Panc1 (cell line): ENCODE measurements at regions of chr21 and their contacts with region 1.

Region 1: GRCh38 chr21:44510508-44511210 is 29.3 kb downstream of the KRTAP10-1 start:
- DNase-seq: no peak
- ATAC-seq: peak; percentile 79
- H3K4me3 ChIP-seq: no peak overlapping the region
- H3K27ac ChIP-seq: no peak overlapping the region
- H3K4me1 ChIP-seq: no peaks in the 10 kb centered on the region
- H3K27me3 ChIP-seq: no peaks in the 10 kb centered on the region
- CTCF ChIP-seq: peak; percentile 86

Region 2: GRCh38 chr21:44723177-44724131 is 212.8 kb after region 1 on chr21:
- CTCF ChIA-PET with region 1: no interaction called
- POLR2A ChIA-PET with region 1: no interaction called
- in situ Hi-C with region 1: no loop called
- intact Hi-C with region 1: no loop called
- DNase-seq: no peak
- ATAC-seq: no peak
- H3K4me3 ChIP-seq: no peak overlapping the region
- H3K27ac ChIP-seq: no peak overlapping the region
- H3K4me1 ChIP-seq: no peaks in the 10 kb centered on the region
- H3K27me3 ChIP-seq: no peaks in the 10 kb centered on the region
- CTCF ChIP-seq: no peak

Region 3: DNA sequence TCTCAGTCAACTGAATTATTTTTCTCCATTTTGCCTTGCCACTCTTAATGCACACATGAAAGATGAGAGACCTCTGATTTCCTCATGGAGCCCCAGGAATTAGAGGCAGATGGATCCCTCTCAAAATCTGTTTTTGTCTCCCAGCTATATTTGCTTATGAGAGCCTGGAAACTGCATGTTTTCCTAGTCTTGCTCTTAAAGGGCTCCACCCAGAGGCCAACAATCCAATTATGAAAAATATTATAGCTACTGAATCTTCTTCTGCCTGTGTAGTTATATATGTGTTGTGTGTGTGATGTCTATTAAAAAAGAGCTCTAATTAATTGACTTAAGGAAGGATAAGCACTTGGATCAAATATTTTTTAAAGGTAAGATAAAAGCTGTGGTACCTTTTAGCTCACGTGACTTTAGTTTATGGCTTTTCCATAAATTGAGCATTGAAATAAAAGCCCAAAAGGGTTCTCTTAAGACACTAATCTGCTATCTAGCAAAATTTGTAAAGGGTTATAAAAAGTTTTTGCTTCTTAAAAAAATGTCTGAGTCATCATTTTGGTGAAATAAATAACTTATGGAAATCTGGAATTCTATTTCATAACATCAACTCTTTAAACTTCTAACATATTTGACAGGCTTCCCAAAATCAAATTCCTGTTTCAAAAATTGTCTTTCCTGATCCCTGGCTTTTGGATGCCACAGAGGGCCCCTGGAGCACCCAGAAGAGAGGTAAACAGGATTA is 231.9 kb after region 1 on chr21:
- CTCF ChIA-PET with region 1: interaction called, 3 read pairs
- POLR2A ChIA-PET with region 1: no interaction called
- in situ Hi-C with region 1: no loop called
- intact Hi-C with region 1: loop called (anchors 5 kb)
- DNase-seq: no peak
- ATAC-seq: no peak
- H3K4me3 ChIP-seq: no peak overlapping the region
- H3K27ac ChIP-seq: no peak overlapping the region
- H3K4me1 ChIP-seq: no peaks in the 10 kb centered on the region
- H3K27me3 ChIP-seq: no peaks in the 10 kb centered on the region
- CTCF ChIP-seq: peak; percentile 50

Region 4: DNA sequence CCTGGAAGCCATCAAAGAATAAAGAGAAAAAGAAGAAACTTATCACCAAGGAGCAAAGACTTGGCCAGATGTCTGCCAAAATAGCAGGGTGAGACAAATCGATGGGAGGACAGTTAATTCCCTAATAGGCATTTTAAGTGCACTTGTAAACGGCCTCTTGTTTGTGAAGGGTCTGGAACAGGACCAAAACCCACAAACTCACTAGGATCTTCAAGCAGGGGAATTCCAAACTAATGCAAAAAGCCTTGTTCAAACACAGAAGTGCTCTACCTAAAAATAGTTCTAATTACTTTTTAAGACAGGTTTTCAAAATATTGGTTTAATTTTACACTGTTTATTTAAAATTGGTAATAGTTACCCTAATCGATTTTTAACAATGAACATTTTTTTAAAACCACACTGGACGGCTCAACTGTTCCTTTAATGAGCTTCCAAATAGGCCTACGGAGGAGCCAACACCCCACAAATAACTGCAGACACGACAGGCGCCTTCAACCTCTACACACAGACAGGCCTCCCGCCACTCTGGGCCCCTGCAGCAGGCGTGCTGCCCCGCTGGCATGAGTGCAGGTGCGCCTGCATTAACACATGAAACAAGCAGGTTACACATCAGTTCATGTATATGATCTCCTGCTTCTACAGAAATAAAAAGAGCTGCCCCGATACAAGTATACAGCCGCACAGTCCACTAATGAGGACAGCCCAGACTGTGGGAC is 275.1 kb after region 1 on chr21:
- CTCF ChIA-PET with region 1: no interaction called
- POLR2A ChIA-PET with region 1: no interaction called
- in situ Hi-C with region 1: no loop called
- intact Hi-C with region 1: loop called (anchors 10 kb)
- DNase-seq: no peak
- ATAC-seq: no peak; the same call in 1 of the 2 replicates
- H3K4me3 ChIP-seq: no peak overlapping the region
- H3K27ac ChIP-seq: 0 out of 2 replicates have a peak overlapping the region, but pooled peaks have one; percentile 29
- H3K4me1 ChIP-seq: peaks cover 12% of the 10 kb centered on the region
- H3K27me3 ChIP-seq: no peaks in the 10 kb centered on the region
- CTCF ChIP-seq: no peak

Region 5: GRCh38 chr21:44831227-44831860 is 320.7 kb after region 1 on chr21:
- CTCF ChIA-PET with region 1: interaction called, 15 read pairs
- POLR2A ChIA-PET with region 1: no interaction called
- in situ Hi-C with region 1: no loop called
- intact Hi-C with region 1: no loop called
- DNase-seq: no peak
- ATAC-seq: no peak
- H3K4me3 ChIP-seq: no peak overlapping the region
- H3K27ac ChIP-seq: no peak overlapping the region
- H3K4me1 ChIP-seq: no peaks in the 10 kb centered on the region
- H3K27me3 ChIP-seq: no peaks in the 10 kb centered on the region
- CTCF ChIP-seq: no peak